HCT116 (cell line): ENCODE measurements at regions of chr1 and their contacts with region 1.

Region 1: DNA sequence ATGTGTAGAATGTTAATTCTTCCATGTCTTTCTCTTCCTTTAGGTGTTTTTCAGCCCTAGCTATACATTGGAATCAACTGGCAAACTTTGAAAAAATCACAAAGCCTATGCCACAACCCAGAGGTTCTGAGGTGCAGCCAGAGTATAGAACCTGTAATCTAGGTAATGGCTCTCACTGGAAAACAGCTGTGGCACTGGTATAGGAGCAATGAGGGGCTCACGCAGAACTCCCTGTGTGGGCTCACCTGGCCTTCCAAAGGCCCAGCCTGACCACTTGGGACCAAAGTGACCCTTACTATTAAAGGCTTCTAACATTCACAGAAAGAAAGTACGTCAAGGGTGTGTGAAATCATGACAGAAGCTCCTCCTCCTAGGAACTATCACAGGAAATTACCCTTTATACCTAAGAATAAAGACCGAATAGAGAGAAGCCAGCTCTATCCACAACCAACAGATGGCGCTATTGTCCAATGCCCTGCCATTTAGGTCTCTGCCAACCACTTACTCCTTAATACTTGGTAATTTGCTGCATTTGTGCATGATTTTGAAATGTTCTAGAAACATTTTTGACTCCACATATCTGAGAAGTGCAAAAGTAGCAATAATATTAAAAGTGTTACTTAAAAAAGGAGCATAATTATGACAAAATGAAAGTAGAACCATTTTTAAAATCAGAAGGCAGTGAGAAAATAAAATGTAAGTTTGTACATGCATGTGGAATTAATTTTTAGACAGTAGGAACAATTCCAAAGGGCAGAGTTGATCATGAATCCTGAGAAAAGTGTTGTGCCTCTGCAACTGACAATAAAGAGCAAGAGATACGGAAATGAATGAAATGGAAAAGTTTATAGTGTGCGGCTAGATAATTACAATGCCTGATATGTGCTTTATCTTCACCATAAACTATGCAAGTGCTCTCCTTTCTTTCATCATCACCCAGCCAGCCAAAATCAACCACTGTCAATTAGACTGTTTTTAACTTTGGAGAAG is 93.1 kb upstream of the HAO2 start:
- DNase-seq: peak; percentile 39
- ATAC-seq: peak; percentile 65
- H3K4me3 ChIP-seq: no peak overlapping the region
- H3K27ac ChIP-seq: no peak overlapping the region
- H3K4me1 ChIP-seq: peaks cover 9 to 18% of the 10 kb centered on the region in 2 experiments
- H3K27me3 ChIP-seq: no peaks in the 10 kb centered on the region; the same call in 1 of the 2 replicates
- CTCF ChIP-seq: peak; percentile 49 to 96 (median 94); a peak in 5 of 6 replicates
- POLR2A ChIP-seq: no peak
- RAD21 ChIP-seq: peak; percentile 60

Region 2: GRCh38 chr1:118077331-118078055 is 1197.9 kb before region 1 on chr1:
- CTCF ChIA-PET with region 1: interaction called, 3 read pairs
- POLR2A ChIA-PET with region 1: no interaction called
- RAD21 ChIA-PET with region 1: no interaction called
- intact Hi-C with region 1: loop called (anchors 5 kb)
- DNase-seq: peak; percentile 40
- ATAC-seq: peak; percentile 38
- H3K4me3 ChIP-seq: no peak overlapping the region
- H3K27ac ChIP-seq: no peak overlapping the region
- H3K4me1 ChIP-seq: no peaks in the 10 kb centered on the region
- H3K27me3 ChIP-seq: peaks cover 12% of the 10 kb centered on the region; the same call in 1 of the 2 replicates
- CTCF ChIP-seq: peak; percentile 39 to 73 (median 42); a peak in 4 of 6 replicates
- POLR2A ChIP-seq: no peak
- RAD21 ChIP-seq: peak; percentile 62

Region 3: GRCh38 chr1:119140177-119141019 is 135.0 kb before region 1 on chr1 and contains the start of gene WARS2:
- CTCF ChIA-PET with region 1: interaction called, 12 read pairs
- POLR2A ChIA-PET with region 1: interaction called, 4 read pairs
- RAD21 ChIA-PET with region 1: no interaction called
- intact Hi-C with region 1: loop called (anchors 5 kb)
- DNase-seq: peak; percentile 97
- ATAC-seq: peak; percentile 97
- H3K4me3 ChIP-seq: peak within 1 kb of the TSS; percentile 65 to 78
- H3K27ac ChIP-seq: peak within 1 kb of the TSS; percentile 91
- H3K4me1 ChIP-seq: peaks cover 3 to 19% of the 10 kb centered on the region in 2 experiments; a peak in 3 of 4 replicates
- H3K27me3 ChIP-seq: no peaks in the 10 kb centered on the region
- CTCF ChIP-seq: no peak
- POLR2A ChIP-seq: peak; percentile 89
- RAD21 ChIP-seq: no peak
- total RNA-seq, gene WARS2: 10.5 TPM